Breast epithelium (tissue), 4 donors: ENCODE measurements at regions of chr7 and their contacts with region 1.

Region 1: DNA sequence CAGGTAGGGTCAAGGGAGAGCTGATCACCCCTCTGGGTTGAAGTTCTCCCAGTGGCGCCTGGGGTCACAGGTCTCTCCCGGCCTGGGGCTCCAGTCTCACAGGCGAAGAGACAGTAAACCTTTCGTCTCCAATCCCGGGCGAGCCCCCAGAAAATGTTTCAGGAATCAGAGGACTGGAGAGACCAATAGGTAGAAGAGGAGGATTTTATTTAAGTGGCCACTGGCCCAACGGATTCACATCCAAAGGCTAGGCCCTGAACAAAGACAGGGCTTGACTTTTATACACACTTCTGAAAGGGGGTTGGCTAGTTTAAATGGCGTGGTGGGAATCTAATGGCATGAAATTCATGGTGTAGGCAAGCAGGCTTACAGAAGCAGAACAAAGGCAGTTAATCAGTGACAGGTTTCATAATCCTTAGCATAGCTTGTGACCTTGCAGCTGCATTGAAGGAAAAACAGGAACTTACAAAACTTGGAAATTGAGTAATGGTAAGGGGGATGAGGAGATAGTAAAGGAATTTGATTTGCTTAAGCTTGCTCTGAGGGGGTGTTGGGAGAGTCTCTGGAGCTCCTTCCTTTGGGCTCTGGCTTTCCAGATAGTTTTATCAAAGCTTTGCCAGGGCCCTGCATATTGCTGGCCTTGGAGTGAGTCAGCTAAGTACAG is 105.5 kb downstream of the TRIM24 start:
- DNase-seq: no peak
- H3K4me3 ChIP-seq: no peak overlapping the region
- H3K27ac ChIP-seq: no peak overlapping the region
- H3K4me1 ChIP-seq: no peaks in the 10 kb centered on the region
- H3K27me3 ChIP-seq: no peaks in the 10 kb centered on the region
- CTCF ChIP-seq: no peak
- POLR2A ChIP-seq: no peak

Region 2: DNA sequence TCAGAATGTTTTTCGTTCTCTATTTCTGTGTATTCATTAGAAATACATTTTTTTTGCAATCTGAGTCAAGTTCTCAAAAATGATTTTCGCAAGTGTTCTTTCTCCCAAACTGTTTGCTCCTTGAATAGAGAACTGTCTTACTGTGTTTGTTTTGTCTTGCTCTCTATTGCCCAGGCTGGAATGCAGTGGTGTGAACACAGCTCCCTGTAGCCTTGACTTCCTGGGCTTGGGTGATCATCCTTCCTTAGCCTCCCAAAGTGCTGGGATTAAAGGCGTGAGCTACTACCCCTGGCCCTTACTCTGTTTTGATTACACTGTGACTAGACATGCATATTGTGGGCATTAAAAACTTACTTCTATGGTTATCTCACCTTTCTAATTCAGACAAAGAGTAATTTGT is 850.8 kb after region 1 on chr7:
- intact Hi-C with region 1: loop called (anchors 10 kb)
- DNase-seq: no peak
- H3K4me3 ChIP-seq: no peak overlapping the region
- H3K27ac ChIP-seq: no peak overlapping the region
- H3K4me1 ChIP-seq: no peaks in the 10 kb centered on the region
- H3K27me3 ChIP-seq: no peaks in the 10 kb centered on the region
- CTCF ChIP-seq: no peak
- POLR2A ChIP-seq: no peak